OCI-LY7 (cell line): ENCODE measurements at regions of chr1 and their contacts with region 1.

Region 1: GRCh38 chr1:180778782-180779398 is 133.8 kb upstream of the KIAA1614 start:
- DNase-seq: peak; percentile 25
- H3K4me3 ChIP-seq: no peak overlapping the region
- H3K27ac ChIP-seq: no peak overlapping the region
- H3K4me1 ChIP-seq: no peaks in the 10 kb centered on the region
- CTCF ChIP-seq: peak; percentile 79

Region 2: DNA sequence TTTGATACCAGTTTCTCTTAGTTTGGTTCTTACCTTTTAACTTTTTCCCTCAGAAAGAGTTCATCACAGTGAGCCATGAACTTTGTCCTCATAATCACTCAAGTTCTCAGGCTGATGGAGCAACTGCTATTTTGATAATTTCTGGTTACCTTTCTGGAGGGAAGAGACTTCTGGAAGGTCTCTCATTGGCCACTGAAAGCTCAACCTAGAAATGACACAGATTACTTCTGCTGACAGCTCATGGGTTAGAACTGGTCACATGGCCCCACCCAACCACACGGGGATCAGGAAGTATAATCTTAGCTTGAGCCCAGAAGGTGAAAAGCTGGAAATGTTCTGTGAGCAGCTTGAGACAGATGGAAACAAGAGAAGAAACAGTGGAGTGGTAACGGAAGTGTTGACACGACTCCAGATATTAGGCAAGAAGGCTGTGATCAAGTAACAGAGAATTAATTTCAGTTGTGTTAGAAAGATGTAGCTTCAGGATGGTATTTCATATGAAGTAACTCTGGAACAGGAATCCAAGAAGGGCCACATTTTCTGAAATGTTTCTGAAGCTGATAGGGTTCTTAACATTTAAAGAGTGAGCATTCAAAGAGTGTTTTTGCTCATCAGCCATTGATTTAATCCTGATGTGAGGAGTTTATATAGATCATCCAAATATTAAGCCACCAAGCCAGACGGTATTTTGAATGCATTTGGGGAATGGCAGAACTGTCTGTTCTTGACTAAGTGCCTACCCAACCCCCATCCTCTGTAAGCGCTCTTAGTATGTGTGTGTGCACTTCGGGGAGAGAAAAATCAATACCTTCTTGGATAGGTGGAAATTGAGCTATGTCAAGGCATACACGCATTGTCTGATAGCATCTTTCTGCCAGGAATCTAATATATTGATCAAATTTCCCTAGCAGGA is 169.0 kb before region 1 on chr1:
- CTCF ChIA-PET with region 1: no interaction called
- POLR2A ChIA-PET with region 1: interaction called, 11 read pairs
- intact Hi-C with region 1: no loop called
- DNase-seq: peak; percentile 5
- H3K4me3 ChIP-seq: no peak overlapping the region
- H3K27ac ChIP-seq: no peak overlapping the region
- H3K4me1 ChIP-seq: peaks cover 10% of the 10 kb centered on the region
- CTCF ChIP-seq: no peak

Region 3: DNA sequence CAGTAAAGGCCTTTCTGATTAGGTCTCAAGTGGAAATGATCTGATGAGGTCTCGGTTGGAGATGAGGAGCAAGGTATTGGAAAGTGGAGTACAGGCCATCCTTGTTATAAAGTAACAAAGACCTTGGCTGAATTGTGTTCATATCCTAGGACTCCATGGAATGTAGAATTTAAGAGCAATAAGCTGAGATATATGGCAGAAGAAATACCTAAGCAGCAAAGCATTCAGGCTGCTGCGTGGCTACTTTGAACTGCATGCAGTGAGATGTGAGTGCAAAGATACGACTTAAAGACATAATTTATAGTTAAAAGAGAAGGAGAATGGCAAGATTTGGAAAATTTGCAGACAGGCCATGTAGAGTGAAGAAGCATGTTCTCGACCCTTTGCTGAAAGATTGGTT is 158.3 kb before region 1 on chr1:
- CTCF ChIA-PET with region 1: no interaction called
- POLR2A ChIA-PET with region 1: no interaction called
- intact Hi-C with region 1: no loop called
- DNase-seq: no peak
- H3K4me3 ChIP-seq: no peak overlapping the region
- H3K27ac ChIP-seq: no peak overlapping the region
- H3K4me1 ChIP-seq: no peaks in the 10 kb centered on the region
- CTCF ChIP-seq: no peak

Region 4: DNA sequence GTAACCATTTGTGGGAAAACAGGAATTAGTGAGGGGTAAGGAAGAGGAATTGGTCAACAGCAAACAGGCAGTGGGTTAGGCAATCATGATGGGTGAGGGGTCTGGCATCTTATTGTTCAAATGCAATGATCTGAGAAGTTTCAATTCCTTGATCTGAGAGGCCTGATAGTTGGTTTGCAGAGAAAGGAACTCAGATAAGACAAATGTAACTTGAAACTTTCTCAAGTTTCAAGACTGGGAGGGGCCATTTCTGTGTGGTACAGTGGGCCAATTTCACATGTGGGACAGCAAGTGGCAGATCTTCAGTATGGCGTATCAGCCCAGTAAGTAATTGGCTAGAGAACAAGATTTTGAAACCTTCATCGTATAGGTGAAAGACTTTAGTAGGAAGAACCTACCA is 44.5 kb before region 1 on chr1:
- CTCF ChIA-PET with region 1: no interaction called
- POLR2A ChIA-PET with region 1: no interaction called
- intact Hi-C with region 1: no loop called
- DNase-seq: peak; percentile 1
- H3K4me3 ChIP-seq: no peak overlapping the region
- H3K27ac ChIP-seq: no peak overlapping the region
- H3K4me1 ChIP-seq: no peaks in the 10 kb centered on the region
- CTCF ChIP-seq: no peak